ENCODE measurements at regions of chr3 and their contacts with region 1.

Region 1: DNA sequence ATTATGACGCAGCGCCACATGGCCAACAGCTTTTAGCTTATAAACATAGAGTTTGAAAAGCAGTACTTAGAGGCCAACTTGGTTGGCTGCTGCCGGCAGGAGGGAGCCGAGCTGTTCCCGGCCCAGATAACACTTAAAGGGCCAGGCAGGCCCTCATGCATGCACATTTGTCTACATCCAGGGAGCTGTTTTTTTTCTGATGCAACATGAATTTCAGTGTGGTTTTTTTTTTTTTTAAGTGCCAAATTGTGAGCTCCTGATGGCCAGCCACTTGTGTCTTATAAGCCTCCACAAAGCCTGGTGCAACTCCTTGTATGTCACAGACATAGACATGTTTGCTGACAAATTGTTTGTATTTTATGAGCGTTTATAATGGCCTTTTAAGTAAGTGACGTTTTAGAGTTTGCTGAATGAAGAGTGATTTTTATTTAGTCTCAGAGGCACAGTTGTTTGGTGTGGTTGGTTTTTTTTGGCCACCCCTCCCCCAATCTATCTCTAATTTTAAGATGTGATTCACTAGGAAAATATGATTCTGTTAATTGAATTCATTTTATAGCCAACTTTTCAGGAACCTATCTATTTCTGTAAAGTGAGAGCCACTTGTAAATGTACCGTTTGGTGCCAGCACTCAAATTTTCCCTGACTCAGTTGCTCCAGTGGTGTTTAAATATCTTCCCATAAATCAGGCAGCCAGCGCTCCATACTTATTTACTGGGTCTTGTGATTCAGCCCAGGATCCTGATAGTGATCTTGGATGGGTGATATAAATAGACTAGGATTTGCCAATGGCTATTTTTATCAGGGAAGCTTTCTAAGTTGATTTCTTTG is 134.3 kb downstream of the VGLL4 start:
- DNase-seq: peak; percentile 85

Region 2: GRCh38 chr3:11465744-11466616 is 43.4 kb before region 1 on chr3:
- intact Hi-C with region 1: loop called (anchors 1 kb)
- DNase-seq: no peak

Region 3: DNA sequence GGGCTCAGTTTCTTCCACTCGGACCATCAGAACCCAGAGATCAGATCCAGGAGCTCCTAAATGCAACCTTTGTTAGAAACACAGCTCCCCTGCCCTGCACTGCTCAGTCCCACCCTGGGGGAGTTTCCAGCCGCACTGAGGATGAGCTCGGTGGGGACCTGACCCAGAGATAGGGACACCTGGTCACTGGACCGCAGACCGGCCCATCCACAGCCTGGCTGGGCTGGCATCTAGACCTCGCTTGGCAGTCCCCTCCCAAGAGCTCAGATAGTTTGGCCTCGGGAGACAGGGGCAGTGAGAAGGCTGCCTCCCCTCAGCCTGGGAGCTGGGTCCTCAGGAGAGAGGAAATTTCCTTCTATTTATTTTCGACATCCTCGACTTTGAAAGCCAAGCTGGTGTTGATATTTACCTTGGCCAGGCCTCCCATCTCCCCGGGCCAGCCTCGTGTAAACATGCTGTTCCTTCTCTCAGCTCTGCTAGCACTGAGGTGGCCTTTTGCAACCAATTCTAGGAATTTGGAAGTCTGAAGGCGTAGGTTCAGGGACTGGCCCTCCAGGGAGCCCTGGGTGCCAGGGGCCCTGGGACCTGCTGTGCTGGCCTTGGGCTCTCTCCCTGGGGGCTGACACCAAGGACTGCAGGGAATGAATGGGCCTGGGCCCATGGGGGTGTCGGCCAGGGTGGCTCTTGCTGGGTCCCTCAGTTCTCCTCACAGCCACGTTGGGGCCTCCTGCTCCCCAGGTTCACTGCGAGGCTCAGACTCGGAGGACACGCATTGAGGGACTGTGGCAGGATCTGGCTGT is 44.2 kb after region 1 on chr3:
- intact Hi-C with region 1: loop called (anchors 5 kb)
- DNase-seq: no peak

Region 4: DNA sequence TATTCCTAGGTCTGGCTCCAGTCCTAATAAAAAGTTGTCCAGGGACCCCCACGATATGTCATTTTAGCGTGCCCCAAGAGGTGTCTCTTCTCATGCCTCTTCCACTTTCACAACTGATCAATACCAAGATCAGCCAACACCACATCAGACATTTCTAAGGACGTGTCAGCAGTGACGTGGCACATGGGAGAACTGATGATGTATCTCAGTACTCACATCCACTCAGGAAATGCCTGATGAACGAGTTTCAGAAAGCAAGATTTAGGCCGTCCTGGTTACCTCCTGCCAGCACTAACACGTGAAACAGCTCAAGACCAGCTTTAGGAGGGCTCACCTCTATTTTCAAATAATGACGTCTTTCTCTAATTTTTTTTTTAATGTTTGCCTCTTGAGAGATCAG is 114.8 kb after region 1 on chr3:
- intact Hi-C with region 1: no loop called
- DNase-seq: no peak

Region 5: DNA sequence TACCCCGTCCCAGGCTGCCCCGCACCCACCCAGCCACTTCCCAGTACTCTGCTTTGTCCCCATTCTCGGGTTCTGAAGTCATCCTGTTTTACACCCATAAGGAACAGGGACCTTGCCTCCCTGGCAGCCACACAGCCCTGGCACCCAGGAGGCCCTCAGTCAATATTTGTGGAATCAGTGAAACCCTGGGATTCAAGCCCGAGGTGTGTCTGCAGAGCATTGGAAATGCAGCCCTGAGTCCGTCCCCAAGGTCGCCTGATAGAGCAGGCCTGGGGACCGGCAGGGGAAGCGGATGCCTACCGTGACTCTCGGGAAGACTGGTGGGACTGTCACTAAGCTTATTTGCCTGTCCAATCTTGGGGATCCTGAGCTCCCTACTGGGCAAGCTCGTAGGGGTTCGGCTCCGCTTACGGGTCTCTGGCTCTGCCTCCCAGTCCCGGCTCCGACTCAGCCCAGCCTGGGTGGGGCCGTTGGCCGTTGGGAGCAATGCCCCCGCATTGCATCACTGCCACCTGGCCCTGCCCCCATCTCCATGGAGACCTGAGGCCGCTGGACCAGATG is 401.7 kb after region 1 on chr3:
- intact Hi-C with region 1: no loop called
- DNase-seq: no peak

Measured in cardiac septum (tissue), 1 donor.